T-cell (primary cell): ENCODE measurements at regions of chr10 and their contacts with region 1.

Region 1: GRCh38 chr10:60728056-60728455 is 50.2 kb upstream of the CDK1 start:
- DNase-seq: peak in 13 of 35 experiments; percentile 7 to 75 (median 25)
- ATAC-seq: peak; percentile 69 to 77 (median 72)
- H3K4me3 ChIP-seq: peak overlapping the region in 1 of 2 donors; percentile 15
- H3K4me3 Mint-ChIP-seq: peak overlapping the region; percentile 77 to 96 (median 79)
- H3K27ac ChIP-seq: peak overlapping the region; percentile 73
- H3K27ac Mint-ChIP-seq: peak overlapping the region; percentile 90 to 94
- H3K4me1 ChIP-seq: peaks cover 18 to 48% of the 10 kb centered on the region in 2 experiments
- H3K4me1 Mint-ChIP-seq: peaks cover 78 to 87% (median 83%) of the 10 kb centered on the region in 3 donors
- H3K27me3 ChIP-seq: peaks cover 0 to 9% of the 10 kb centered on the region in 2 experiments
- H3K27me3 Mint-ChIP-seq: peaks cover 0 to 8% of the 10 kb centered on the region in 2 donors

Region 2: DNA sequence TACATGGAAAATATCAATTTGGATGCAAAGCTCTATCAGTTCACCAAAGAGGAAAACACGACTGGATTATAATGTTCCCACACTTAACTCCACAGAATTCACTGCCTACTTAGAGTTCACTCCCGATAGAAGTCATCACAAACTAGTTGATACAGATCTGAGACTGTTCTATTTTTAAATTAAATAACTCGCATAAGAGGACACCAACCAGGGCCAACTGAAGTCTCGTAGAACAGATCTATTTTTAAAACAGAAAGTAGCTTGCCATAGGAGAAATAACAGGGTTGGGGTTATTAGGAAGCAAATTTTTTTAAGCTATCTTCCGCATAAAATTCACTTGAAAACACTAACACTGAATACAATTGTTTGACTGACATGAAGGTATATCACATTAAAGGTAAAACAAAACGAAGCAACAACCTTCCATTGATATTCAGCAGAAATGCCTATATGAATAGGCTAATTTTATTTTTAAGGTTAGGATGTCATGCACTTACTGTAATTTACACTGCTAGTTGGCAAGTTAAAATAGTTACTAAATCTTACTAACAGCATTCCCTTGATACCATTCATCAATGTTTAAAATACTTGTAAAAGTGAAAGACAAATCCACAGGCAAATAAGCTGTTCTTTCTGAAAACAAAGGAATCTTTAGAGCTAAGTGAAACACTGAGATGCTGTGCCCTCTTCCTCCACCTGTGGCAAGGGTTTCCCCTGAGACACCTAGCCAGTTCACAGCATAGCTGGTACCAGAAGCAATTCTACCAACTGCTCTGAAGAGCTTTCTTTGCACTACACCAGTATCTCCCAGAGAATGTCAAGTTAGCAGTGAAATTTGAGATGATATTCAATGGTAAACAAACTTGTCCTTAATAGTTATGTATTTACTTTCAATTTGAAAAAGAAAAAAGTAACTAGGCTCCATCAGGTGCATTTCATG is 151.7 kb before region 1 on chr10:
- CTCF ChIA-PET with region 1: no interaction called
- POLR2A ChIA-PET with region 1: interaction called in 1 of 2 experiments, 13 read pairs
- DNase-seq: no peak
- ATAC-seq: peak in 1 of 4 experiments; percentile 46
- H3K4me3 ChIP-seq: no peak overlapping the region
- H3K4me3 Mint-ChIP-seq: no peak overlapping the region
- H3K27ac ChIP-seq: no peak overlapping the region
- H3K27ac Mint-ChIP-seq: no peak overlapping the region
- H3K4me1 ChIP-seq: peaks cover 0 to 2% of the 10 kb centered on the region in 2 experiments
- H3K4me1 Mint-ChIP-seq: peaks cover 32 to 49% (median 41%) of the 10 kb centered on the region in 3 donors
- H3K27me3 ChIP-seq: no peaks in the 10 kb centered on the region
- H3K27me3 Mint-ChIP-seq: peaks cover 0 to 1% of the 10 kb centered on the region in 2 donors

Region 3: DNA sequence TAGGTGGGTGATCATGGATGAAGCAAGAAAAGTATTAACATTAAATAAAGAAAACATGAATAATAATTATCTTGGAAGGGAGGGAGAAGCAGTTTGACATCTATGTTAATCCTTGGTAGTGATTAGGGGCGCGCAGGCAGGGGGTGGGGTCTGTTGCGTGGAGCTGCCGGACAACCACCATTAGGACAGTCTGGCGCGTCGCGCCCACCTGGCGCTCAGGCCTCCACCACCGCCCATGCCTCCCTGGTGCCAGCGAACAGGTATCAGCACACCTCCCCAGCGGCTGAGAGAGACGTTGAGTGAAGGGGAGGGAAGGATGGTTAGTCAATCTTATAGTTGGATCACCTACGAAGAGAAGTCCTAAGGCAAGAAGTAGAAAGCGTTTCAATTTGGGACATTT is 44.0 kb before region 1 on chr10:
- CTCF ChIA-PET with region 1: no interaction called
- POLR2A ChIA-PET with region 1: no interaction called
- DNase-seq: no peak
- ATAC-seq: no peak
- H3K4me3 ChIP-seq: no peak overlapping the region
- H3K4me3 Mint-ChIP-seq: no peak overlapping the region
- H3K27ac ChIP-seq: no peak overlapping the region
- H3K27ac Mint-ChIP-seq: peak overlapping the region in 1 of 2 donors; percentile 37
- H3K4me1 ChIP-seq: no peaks in the 10 kb centered on the region
- H3K4me1 Mint-ChIP-seq: peaks cover 17 to 33% (median 30%) of the 10 kb centered on the region in 3 donors
- H3K27me3 ChIP-seq: no peaks in the 10 kb centered on the region
- H3K27me3 Mint-ChIP-seq: no peaks in the 10 kb centered on the region